ENCODE measurements at regions of chr2 and their contacts with region 1.

Region 1: GRCh38 chr2:40760071-40760666 is 308.3 kb upstream of the SLC8A1 start:
- DNase-seq: peak; percentile 70

Region 2: DNA sequence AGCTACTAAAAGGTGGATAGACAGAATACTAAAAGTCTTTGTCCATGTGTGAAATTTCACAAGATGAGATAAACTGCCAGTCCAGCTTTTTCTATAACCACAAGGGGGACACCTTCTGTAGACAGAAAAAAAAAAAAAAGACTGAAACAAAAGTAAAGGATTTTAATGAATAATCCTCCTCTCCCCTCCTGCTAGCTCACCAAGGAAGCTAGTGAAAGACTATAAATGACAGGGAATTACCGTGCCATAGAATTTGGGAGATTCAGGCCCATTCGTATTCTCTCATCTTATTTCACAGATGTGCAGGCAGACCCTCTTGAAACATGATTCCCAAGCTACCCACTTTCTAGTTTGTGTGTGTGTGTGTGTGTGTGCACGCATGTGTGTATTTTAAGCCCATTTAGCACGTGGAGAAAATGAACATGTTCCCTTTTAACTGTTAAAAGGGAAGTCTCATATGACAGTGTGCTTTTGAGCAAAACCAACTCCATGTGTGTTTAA is 272.0 kb before region 1 on chr2:
- in situ Hi-C with region 1: loop called (anchors 25 kb)
- DNase-seq: peak; percentile 75